CD14-positive monocyte (primary cell): ENCODE measurements at regions of chr20 and their contacts with region 1.

Region 1: GRCh38 chr20:22052025-22052650 is 346.7 kb downstream of the PAX1 start:
- DNase-seq: no peak
- H3K4me3 ChIP-seq: no peak overlapping the region
- H3K4me3 Mint-ChIP-seq: no peak overlapping the region
- H3K27ac ChIP-seq: no peak overlapping the region
- H3K27ac Mint-ChIP-seq: no peak overlapping the region
- H3K4me1 ChIP-seq: no peaks in the 10 kb centered on the region
- H3K4me1 Mint-ChIP-seq: no peaks in the 10 kb centered on the region
- H3K27me3 ChIP-seq: no peaks in the 10 kb centered on the region
- H3K27me3 Mint-ChIP-seq: no peaks in the 10 kb centered on the region
- CTCF ChIP-seq: no peak

Region 2: GRCh38 chr20:20979934-20980333 is 1072.2 kb before region 1 on chr20:
- intact Hi-C with region 1: no loop called
- DNase-seq: no peak
- H3K4me3 ChIP-seq: no peak overlapping the region
- H3K4me3 Mint-ChIP-seq: no peak overlapping the region
- H3K27ac ChIP-seq: no peak overlapping the region
- H3K27ac Mint-ChIP-seq: no peak overlapping the region
- H3K4me1 ChIP-seq: no peaks in the 10 kb centered on the region
- H3K4me1 Mint-ChIP-seq: no peaks in the 10 kb centered on the region
- H3K27me3 ChIP-seq: no peaks in the 10 kb centered on the region
- H3K27me3 Mint-ChIP-seq: peaks cover 0 to 7% (median 0%) of the 10 kb centered on the region in 3 donors
- CTCF ChIP-seq: no peak

Region 3: DNA sequence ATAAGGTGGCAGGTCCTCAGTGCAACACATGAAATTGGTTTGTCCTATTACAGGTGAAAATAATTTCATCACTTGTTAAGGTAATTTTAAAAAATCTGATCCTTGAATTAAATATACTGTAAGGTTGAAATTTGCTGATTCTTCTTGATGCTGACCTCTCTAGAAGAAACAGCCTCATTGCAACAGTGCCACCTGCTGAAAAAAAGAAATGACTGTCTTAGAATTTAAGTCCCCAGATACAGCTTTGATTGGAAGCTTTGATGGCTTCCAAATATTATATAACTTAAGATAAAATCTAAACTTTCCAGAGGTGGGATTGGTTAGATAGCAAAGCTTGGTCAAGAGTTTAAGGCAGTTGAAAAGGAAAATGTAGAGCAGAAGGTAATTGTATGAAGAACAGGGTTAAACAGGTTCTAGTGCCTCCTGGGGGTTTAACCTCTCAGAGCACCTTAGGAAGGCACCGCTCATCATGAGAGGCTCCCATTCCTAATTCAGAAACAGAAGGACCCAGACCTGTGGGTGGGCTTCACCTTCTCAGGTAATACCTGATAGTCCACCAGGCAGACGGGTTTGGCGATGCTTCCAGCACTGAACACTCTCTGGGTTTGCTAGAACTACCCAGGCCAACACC is 54.3 kb after region 1 on chr20:
- intact Hi-C with region 1: loop called in 1 of 2 experiments (anchors 10 kb)
- DNase-seq: no peak
- H3K4me3 ChIP-seq: no peak overlapping the region
- H3K4me3 Mint-ChIP-seq: no peak overlapping the region
- H3K27ac ChIP-seq: no peak overlapping the region
- H3K27ac Mint-ChIP-seq: no peak overlapping the region
- H3K4me1 ChIP-seq: no peaks in the 10 kb centered on the region
- H3K4me1 Mint-ChIP-seq: no peaks in the 10 kb centered on the region
- H3K27me3 ChIP-seq: no peaks in the 10 kb centered on the region
- H3K27me3 Mint-ChIP-seq: peaks cover 0 to 2% (median 0%) of the 10 kb centered on the region in 3 donors
- CTCF ChIP-seq: no peak